Right ventricle myocardium inferior (tissue), 1 donor: ENCODE measurements at regions of chr2 and their contacts with region 1.

Region 1: DNA sequence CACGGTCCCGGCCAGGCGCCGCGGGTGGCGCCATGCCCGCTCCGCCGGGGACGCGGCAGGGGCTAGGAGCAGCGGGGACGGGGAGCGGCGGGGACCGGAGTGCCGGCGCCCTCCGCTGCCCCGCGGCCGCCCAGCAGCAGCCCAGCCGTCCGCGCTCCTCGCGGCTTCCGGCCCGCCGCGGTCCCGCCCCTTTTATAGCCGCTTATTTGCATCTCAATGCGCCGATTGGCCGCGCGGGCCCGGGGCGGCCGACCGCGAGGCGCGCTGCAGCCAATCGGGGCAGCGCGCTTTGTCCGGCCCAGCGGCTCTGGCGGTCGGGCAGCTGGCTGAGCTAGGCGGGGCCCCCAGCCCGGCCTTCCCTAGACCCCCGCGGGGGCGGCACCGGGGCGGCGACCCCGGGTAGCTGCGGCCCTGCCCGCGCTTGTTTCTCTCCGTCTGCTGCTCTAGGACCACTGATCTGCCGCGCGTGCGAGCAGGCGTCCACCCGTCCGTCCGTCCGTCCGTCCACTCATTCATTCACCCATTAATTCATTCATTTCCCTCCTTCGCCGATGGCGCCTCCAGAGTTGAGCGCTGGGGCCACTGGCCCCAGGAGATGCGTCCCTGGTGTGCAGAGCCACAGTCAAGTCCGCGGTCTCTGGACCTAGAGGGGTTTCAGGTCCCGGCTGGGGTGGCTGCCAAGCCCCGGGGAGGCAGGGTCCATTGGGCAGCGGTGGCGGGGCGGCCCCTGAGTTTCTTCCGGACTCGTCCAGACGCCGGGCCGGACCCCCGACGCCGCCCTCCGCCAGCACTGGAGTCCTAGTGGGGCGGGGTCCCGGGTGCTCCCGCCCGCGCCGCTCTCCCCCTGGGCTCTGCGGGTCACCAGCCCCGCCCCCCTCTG is at the start of gene HES6:
- DNase-seq: peak; percentile 96
- ATAC-seq: peak; percentile 90
- total RNA-seq, gene HES6: 4.3 TPM

Region 2: GRCh38 chr2:238053191-238053776 is 186.8 kb before region 1 on chr2:
- intact Hi-C with region 1: no loop called
- DNase-seq: no peak
- ATAC-seq: no peak

Region 3: GRCh38 chr2:238139196-238140039 is 100.7 kb before region 1 on chr2:
- intact Hi-C with region 1: no loop called
- DNase-seq: peak; percentile 53
- ATAC-seq: peak; percentile 63

Region 4: DNA sequence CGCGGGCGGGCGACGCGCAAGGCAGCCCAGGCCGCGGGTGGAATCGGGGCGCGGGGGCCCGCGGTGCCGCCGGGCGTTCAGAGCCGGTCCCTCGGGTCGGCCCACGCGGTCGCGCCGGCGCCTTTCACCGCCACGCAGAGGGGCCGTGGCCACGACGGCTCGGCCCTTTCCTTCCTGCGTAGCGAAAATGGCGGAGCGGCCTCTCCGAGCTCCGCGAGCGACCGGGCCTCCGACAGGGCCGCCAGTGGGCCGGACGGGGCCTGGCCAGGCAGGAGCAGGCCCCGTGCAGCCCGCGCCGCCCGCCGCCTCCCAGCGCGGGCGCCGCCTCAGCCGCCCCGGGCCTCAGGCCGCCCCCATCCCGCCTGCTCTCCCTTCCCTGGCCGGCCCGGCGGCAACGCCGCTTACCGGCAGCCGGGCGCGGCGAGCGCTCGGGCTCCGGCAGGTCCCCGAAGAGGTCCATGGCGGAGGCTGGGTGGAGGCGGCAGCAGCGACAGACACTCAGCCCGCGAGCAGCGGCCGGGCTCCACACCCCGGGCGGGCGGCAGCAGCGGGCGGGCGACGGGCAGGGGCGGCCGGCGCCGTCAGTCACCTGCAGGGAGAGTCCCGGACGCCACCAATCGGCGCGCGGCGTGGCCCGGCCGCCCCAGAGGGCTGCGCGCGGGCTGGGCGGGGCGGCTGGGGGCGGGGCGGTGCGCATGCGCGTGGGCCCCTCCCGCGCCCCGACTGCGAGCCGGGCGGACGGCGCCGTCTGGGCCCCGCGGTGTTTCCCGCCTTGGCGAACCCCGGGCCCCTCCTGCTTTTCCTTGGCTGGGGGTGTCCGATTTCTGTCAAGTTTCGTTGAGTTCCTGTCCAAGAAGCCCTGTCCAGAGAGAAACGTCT is 36.8 kb before region 1 on chr2 and contains the start of gene ILKAP:
- intact Hi-C with region 1: loop called (anchors 2 kb)
- DNase-seq: peak; percentile 96
- ATAC-seq: peak; percentile 100
- total RNA-seq, gene ILKAP: 26.2 TPM

Region 5: DNA sequence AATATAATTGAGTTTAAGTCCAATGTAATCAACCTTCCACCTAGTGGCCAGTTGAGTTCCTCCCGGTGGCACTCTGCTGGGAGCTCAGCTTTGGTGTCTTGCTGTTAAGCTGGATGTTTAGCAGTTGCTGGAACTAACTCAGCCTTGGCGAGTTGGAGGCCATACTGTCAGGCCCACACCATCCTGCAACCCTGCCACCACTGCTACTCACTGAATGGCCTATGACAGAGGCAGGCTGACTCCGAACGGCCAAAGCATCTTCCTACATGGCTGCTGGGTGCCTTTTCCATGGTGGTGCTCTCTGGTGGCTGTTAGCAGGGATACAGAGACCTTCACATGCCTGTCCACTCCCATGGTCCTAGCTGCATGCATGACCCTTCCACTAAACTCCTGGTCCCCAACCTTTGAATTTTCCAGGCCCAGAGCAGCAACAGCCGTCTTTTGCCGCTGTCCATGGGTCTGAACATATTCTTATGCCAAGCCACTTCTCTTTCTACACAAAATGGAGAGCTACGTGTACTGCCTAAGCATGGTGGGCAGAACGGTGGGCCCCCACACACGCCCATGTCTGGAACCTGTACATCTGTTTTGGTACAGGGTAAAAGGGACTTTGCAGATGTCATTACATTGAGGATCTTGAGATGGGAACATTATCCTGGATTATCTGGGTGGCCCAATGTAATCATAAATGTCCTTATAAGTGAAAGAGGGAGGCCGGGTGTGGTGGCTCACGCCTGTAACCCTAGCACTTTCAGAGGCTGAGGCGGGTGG is 65.2 kb after region 1 on chr2:
- intact Hi-C with region 1: no loop called
- DNase-seq: no peak
- ATAC-seq: no peak